HAP-1 (cell line): ENCODE measurements at regions of chr15 and their contacts with region 1.

Region 1: DNA sequence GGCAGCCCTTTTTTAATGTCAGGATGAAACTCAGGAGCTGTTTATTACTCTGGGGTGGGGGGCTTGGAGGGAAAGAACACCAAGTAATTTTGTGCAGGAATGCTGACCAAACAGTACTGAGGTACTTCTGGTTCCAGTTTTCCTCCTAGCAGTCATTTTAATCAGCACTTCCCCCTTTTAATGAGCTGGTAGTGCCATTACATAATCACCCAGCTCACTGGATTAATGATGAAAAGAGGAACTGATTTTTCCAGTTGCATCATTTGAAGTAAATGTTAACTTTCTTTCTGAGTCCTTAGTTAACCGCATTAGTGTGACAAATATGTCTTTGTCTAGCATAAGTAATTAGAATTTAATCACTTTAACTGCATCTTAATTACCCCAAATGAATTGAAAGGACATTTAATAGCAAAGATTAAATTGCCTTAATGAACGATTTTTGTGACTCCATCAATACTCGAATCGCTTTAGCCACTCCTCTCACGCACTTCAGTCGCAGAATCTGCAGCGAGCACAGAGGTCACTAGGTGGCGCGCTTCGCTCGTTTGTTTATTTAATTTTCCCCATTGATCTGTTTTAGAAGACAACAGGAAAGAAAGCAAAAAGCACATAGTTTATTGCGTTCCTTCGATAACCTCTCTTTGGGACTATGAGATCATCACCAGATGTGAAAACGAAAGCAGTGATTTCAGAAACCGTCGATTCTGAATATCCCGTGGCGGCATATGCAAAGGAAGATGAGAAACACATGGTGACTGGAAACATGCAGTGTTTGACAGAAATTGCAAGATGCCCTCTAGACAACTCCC is 9.8 kb downstream of the ONECUT1 start:
- DNase-seq: peak; percentile 53 to 79
- H3K4me3 ChIP-seq: no peak overlapping the region
- H3K4me1 ChIP-seq: no peaks in the 10 kb centered on the region
- H3K27me3 ChIP-seq: peaks cover 71% of the 10 kb centered on the region

Region 2: GRCh38 chr15:53072025-53072471 is 291.7 kb after region 1 on chr15:
- in situ Hi-C with region 1: loop called (anchors 25 kb)
- DNase-seq: peak in 1 of 2 experiments; percentile 70
- H3K4me3 ChIP-seq: no peak overlapping the region
- H3K4me1 ChIP-seq: no peaks in the 10 kb centered on the region
- H3K27me3 ChIP-seq: no peaks in the 10 kb centered on the region

Region 3: DNA sequence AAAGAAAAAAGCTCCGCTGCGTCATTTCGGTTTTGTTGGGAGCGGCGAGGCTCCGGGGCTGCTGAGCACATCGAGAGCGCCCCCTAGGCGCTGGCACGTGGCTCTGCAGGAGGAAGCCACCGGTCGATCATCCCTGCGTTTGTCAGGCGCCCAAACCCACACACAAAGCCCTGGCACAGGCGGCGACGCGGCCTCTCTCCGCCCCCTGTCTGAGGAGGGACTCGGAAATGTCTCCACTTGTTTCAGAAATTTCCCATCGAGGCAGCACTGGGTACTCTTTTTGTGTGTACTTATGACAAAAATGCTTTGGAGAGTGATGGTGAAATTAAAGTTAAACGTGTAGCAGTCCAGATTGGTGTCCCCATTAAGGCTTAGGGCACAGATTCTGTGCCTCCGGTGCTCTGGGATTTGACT is 417.1 kb after region 1 on chr15:
- in situ Hi-C with region 1: loop called (anchors 10 kb)
- DNase-seq: peak; percentile 57 to 78
- H3K4me3 ChIP-seq: no peak overlapping the region
- H3K4me1 ChIP-seq: no peaks in the 10 kb centered on the region
- H3K27me3 ChIP-seq: no peaks in the 10 kb centered on the region; the same call in 1 of the 2 replicates